ENCODE measurements at regions of chr3 and their contacts with region 1.

Region 1: GRCh38 chr3:48548729-48549705 is 7.6 kb downstream of the PFKFB4 start:
- DNase-seq: peak; percentile 95
- H3K4me3 ChIP-seq: no peak overlapping the region
- H3K27ac ChIP-seq: peak overlapping the region in 1 of 4 donors; percentile 23
- H3K4me1 ChIP-seq: peaks cover 0 to 6% (median 2%) of the 10 kb centered on the region in 4 donors
- H3K27me3 ChIP-seq: no peaks in the 10 kb centered on the region
- CTCF ChIP-seq: peak; percentile 96 to 99 (median 97)
- EP300 ChIP-seq: no peak
- POLR2A ChIP-seq: no peak

Region 2: GRCh38 chr3:48273594-48274211 is 275.3 kb before region 1 on chr3:
- intact Hi-C with region 1: loop called (anchors 2 kb)
- DNase-seq: no peak
- H3K4me3 ChIP-seq: no peak overlapping the region
- H3K27ac ChIP-seq: no peak overlapping the region
- H3K4me1 ChIP-seq: peaks cover 0 to 6% (median 3%) of the 10 kb centered on the region in 4 donors
- H3K27me3 ChIP-seq: no peaks in the 10 kb centered on the region
- CTCF ChIP-seq: peak; percentile 74 to 84 (median 74)
- EP300 ChIP-seq: no peak
- POLR2A ChIP-seq: no peak

Region 3: GRCh38 chr3:48465531-48466378 is 83.3 kb before region 1 on chr3:
- intact Hi-C with region 1: loop called (anchors 1 kb)
- DNase-seq: peak; percentile 99
- H3K4me3 ChIP-seq: peak overlapping the region; percentile 56 to 71 (median 58)
- H3K27ac ChIP-seq: peak overlapping the region; percentile 96 to 100 (median 98)
- H3K4me1 ChIP-seq: peaks cover 62 to 65% (median 63%) of the 10 kb centered on the region in 4 donors
- H3K27me3 ChIP-seq: no peaks in the 10 kb centered on the region
- CTCF ChIP-seq: peak; percentile 81 to 91 (median 90)
- EP300 ChIP-seq: no peak
- POLR2A ChIP-seq: peak; percentile 66

Region 4: GRCh38 chr3:48492543-48493501 is 56.2 kb before region 1 on chr3:
- intact Hi-C with region 1: no loop called
- DNase-seq: no peak
- H3K4me3 ChIP-seq: no peak overlapping the region
- H3K27ac ChIP-seq: no peak overlapping the region
- H3K4me1 ChIP-seq: no peaks in the 10 kb centered on the region
- H3K27me3 ChIP-seq: no peaks in the 10 kb centered on the region
- CTCF ChIP-seq: no peak
- EP300 ChIP-seq: no peak
- POLR2A ChIP-seq: no peak

Region 5: DNA sequence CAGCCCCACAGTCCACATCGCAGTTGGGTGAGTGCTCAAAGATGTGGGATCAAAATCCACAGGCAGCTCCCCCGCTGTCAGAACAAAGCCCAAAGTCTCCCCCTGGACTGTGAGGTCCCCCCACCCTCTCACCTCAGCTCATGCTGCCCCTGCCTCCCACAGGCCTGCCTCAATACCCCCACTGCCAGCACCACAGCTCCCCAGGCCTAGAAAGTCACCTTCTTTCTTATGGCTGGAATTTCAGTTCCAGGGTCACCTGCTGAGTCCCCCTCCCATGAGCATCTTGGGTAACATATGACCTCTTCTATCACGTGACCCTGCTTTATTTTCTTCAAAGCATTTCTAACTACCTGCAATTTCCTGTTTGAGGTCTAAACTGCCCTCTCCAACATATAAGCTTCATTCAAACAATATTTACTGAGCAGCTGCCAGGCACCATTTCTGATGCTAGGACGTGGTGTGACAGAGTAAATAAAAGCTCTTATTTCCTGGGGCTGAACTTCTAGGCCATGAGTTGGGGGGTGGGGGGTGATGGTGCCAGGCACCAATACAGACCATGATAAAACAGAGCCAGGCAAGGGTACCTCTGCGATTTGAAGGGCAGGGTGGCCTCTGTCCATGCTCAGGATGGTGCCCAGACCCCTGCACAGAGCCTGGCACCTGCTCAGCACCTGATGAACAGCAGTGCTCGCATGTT is 75.0 kb after region 1 on chr3:
- intact Hi-C with region 1: no loop called
- DNase-seq: no peak
- H3K4me3 ChIP-seq: no peak overlapping the region
- H3K27ac ChIP-seq: no peak overlapping the region
- H3K4me1 ChIP-seq: no peaks in the 10 kb centered on the region
- H3K27me3 ChIP-seq: no peaks in the 10 kb centered on the region
- CTCF ChIP-seq: no peak
- EP300 ChIP-seq: no peak
- POLR2A ChIP-seq: no peak

Region 6: GRCh38 chr3:48635222-48636021 is 86.4 kb after region 1 on chr3 and contains the start of gene SLC26A6:
- intact Hi-C with region 1: no loop called
- DNase-seq: peak; percentile 99
- H3K4me3 ChIP-seq: peak within 1 kb of the TSS; percentile 80 to 99 (median 90)
- H3K27ac ChIP-seq: peak within 1 kb of the TSS; percentile 76 to 89 (median 86)
- H3K4me1 ChIP-seq: peaks cover 22 to 30% (median 25%) of the 10 kb centered on the region in 4 donors
- H3K27me3 ChIP-seq: no peaks in the 10 kb centered on the region
- CTCF ChIP-seq: peak; percentile 43 to 49 (median 47)
- EP300 ChIP-seq: no peak
- POLR2A ChIP-seq: no peak
- total RNA-seq, gene SLC26A6: 6.1 to 11.7 (median 8.8) TPM

Region 7: GRCh38 chr3:48747015-48747615 is 198.1 kb after region 1 on chr3:
- intact Hi-C with region 1: no loop called
- DNase-seq: no peak
- H3K4me3 ChIP-seq: no peak overlapping the region
- H3K27ac ChIP-seq: peak overlapping the region; percentile 22 to 64 (median 36)
- H3K4me1 ChIP-seq: peaks cover 10 to 16% (median 15%) of the 10 kb centered on the region in 4 donors
- H3K27me3 ChIP-seq: no peaks in the 10 kb centered on the region
- CTCF ChIP-seq: no peak
- EP300 ChIP-seq: no peak
- POLR2A ChIP-seq: no peak

Measured in esophagus muscularis mucosa (tissue), 4 donors.